ENCODE measurements at regions of chr1 and their contacts with region 1.

Region 1: DNA sequence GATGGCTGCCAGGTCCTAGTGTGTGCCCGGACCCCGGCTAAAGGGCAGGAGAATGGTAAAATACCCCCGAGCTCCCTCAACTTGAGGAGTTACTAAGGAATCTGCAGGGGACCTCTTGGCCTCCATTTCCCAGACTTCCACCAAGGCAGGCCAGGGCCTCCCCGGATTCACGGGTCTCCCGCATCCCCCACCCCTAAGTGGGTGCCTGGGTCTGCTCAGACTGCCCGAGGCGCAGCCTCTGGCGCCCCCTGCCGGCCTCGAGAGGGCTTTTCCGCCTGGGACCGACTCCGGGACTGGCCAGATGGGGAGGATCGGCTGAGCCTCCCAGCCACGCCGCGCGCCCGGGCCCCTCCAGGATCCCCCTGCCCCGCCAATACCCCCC is 1.7 kb downstream of the PLEKHG5 start:
- DNase-seq: peak in 9 of 10 donors; percentile 58 to 96 (median 74)

Region 2: GRCh38 chr1:6523566-6523965 is 33.8 kb after region 1 on chr1:
- intact Hi-C with region 1: loop called (anchors 5 kb)
- DNase-seq: peak in 2 of 10 donors; percentile 62 to 64

Region 3: GRCh38 chr1:6646499-6647148 is 156.8 kb after region 1 on chr1:
- intact Hi-C with region 1: loop called (anchors 1 kb)
- DNase-seq: peak in 3 of 10 donors; percentile 26 to 82 (median 45)

Measured in posterior cingulate gyrus (tissue), 11 donors.